ENCODE measurements at regions of chr10 and their contacts with region 1.

Region 1: DNA sequence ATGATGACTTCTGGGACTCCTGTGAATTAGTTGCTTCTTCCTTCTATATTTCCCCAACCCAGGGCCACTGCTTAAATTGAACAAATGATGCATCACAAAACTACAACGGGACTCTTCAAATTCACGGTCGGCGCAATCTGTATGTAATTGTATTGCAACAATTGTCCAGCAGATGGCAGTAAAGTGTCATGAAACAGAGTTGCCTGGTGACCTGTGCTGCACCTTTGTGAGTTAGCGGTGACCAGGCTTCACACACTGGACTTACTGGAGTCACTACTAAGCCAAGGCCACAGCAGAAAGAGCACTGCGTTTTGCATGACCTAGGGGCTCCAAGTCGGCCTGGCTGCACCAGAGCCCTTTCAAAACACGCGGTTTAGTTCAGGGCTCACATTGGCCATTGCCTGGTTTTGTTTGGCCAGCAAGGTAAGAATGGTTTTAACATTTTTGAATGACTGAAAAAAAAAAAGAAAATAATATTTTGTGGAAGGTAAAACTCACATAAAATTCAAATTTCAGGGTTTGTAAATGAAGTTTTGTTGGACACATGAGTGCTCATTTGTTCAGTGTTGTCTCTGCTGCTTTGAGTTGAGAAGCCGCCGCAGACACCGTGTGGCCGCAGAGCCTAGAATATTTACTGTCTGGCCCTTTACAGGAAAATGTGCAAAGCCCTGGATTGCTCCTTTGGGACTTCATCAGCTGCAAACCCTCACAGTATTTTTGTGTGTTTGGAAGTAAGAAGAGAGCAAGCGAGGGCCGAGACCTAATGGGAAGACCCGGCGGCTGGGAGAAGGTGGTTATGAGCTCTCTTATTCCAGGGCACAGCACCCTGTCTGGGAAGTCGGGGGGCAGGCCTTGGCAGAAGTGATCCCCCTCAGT is 23.2 kb upstream of the ZNF32 start:
- DNase-seq: peak in 1 of 3 donors; percentile 82
- ATAC-seq: peak; percentile 77
- H3K4me3 ChIP-seq: no peak overlapping the region
- H3K4me1 ChIP-seq: peaks cover 4% of the 10 kb centered on the region
- CTCF ChIP-seq: peak; percentile 40

Region 2: DNA sequence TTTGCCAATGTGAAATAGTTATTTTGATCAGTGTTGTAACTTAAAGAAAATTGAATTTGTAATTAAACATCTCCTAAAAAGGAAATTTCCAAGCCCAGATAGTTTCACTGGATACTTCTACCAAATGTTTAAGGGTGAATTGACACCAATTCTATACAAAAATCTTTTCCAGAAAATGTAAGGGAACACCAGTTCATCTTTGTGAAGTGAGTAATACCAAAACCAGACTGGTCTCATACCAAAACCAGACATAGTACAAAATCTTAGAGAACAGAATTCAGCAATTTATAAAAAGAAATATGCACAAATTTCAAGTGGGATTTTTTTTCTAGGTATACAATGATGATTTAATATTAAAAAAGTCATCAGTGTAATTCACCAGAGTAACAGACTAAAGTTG is 62.8 kb after region 1 on chr10:
- intact Hi-C with region 1: no loop called
- DNase-seq: no peak
- ATAC-seq: no peak
- H3K4me3 ChIP-seq: no peak overlapping the region
- H3K4me1 ChIP-seq: no peaks in the 10 kb centered on the region
- CTCF ChIP-seq: no peak

Region 3: GRCh38 chr10:44071479-44071878 is 399.6 kb after region 1 on chr10:
- intact Hi-C with region 1: no loop called
- DNase-seq: no peak
- ATAC-seq: no peak
- H3K4me3 ChIP-seq: no peak overlapping the region
- H3K4me1 ChIP-seq: no peaks in the 10 kb centered on the region
- CTCF ChIP-seq: no peak

Region 4: GRCh38 chr10:44386546-44387052 is 714.7 kb after region 1 on chr10:
- intact Hi-C with region 1: loop called (anchors 5 kb)
- DNase-seq: peak in 2 of 3 donors; percentile 64 to 77
- ATAC-seq: peak; percentile 86
- H3K4me3 ChIP-seq: no peak overlapping the region
- H3K4me1 ChIP-seq: no peaks in the 10 kb centered on the region
- CTCF ChIP-seq: peak; percentile 86

Region 5: GRCh38 chr10:44857363-44858016 is 1185.6 kb after region 1 on chr10:
- intact Hi-C with region 1: loop called (anchors 10 kb)
- DNase-seq: peak in 2 of 3 donors; percentile 71 to 73
- ATAC-seq: peak; percentile 77
- H3K4me3 ChIP-seq: no peak overlapping the region
- H3K4me1 ChIP-seq: no peaks in the 10 kb centered on the region
- CTCF ChIP-seq: peak; percentile 94

Region 6: DNA sequence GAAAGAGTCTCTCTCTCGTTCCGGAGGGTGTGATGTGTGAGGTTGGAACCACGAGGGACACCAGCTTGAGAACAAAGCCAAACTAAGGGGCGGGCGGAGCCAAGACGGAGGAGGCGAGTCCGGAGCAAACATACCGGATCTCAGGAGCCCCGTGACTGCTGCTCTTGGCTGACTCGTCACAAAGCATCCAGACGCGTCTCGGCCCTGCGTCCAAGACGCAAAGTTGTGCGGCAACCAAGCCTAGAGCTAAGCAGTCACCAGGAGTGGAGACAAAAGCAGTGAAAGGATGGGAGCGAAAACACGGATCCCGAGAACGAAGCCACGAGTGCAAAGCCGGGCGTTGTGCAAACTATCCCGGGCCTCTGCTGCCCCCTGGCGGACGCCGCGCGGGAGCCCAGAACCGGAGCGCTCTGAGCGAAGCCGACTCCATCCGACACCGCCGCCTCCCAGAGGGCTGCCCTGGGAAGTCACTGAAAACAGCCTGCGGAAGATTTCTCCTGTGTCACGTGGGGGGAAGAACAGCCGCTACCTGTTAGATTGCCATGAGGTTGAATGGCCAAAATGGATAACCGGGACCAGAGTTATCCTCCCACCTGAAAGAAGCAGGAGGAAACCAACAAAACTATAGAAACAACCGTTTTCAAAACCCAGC is 1192.9 kb after region 1 on chr10:
- intact Hi-C with region 1: loop called (anchors 10 kb)
- DNase-seq: peak; percentile 88 to 97 (median 95)
- ATAC-seq: peak; percentile 98
- H3K4me3 ChIP-seq: peak overlapping the region; percentile 2
- H3K4me1 ChIP-seq: peaks cover 10% of the 10 kb centered on the region
- CTCF ChIP-seq: peak; percentile 99

Measured in mucosa of descending colon (tissue), 3 donors.